ENCODE measurements at regions of chr3 and their contacts with region 1.

Region 1: DNA sequence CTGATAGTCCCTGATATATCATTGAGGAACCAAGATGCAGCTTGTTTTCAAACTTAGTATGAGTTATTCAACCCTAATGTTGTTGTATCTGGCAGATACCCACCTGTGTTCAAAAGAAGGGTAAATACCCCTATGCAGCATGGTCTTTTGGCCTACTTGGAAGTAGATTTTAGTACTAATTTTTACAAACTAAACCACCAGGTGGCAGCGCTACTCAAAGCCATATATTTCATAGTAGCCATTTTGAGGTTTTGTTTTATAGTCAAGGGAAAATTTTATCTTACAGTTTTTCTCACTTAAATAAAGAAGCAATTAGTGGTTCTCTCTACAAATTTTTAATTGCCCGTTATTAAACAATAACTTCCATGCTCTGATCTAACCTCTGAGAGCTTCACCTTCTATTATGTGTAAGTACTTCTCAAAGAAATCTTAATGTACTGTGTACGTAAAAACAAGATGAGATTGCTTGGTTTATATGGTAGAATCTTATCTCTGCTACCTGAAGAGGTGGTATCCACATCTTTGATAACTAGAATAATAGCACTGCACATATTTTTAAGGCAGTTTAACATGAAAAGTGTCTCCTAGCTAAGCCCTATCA is 31.5 kb upstream of the MLF1 start:
- DNase-seq: peak; percentile 70
- H3K4me3 Mint-ChIP-seq: no peak overlapping the region
- H3K27ac Mint-ChIP-seq: no peak overlapping the region
- H3K4me1 Mint-ChIP-seq: no peaks in the 10 kb centered on the region
- H3K27me3 Mint-ChIP-seq: no peaks in the 10 kb centered on the region
- CTCF ChIP-seq: peak; percentile 55

Region 2: GRCh38 chr3:157999246-157999645 is 540.3 kb before region 1 on chr3:
- CTCF ChIA-PET with region 1: no interaction called
- intact Hi-C with region 1: loop called (anchors 10 kb)
- DNase-seq: peak; percentile 15
- H3K4me3 Mint-ChIP-seq: no peak overlapping the region
- H3K27ac Mint-ChIP-seq: no peak overlapping the region
- H3K4me1 Mint-ChIP-seq: no peaks in the 10 kb centered on the region
- H3K27me3 Mint-ChIP-seq: no peaks in the 10 kb centered on the region
- CTCF ChIP-seq: no peak

Region 3: DNA sequence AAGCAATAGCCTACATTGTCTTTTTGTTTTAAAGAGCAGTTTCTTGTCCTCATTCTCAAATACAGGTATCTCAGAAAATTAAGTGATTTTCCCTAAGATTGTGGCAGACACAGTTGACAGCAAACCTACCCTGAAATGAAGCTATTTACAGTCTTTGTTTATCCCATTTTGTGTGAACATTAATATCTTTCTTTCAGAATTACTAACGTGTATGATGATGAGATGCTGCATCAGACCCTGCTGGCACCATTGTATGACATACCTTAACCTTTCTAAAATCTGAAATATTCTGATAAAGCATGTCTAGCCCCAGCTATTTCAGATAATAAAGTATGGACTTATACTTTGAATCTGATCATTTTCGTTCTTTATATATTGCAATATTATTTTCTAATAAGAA is 243.7 kb before region 1 on chr3:
- CTCF ChIA-PET with region 1: no interaction called
- intact Hi-C with region 1: no loop called
- DNase-seq: no peak
- H3K4me3 Mint-ChIP-seq: no peak overlapping the region
- H3K27ac Mint-ChIP-seq: no peak overlapping the region
- H3K4me1 Mint-ChIP-seq: no peaks in the 10 kb centered on the region
- H3K27me3 Mint-ChIP-seq: no peaks in the 10 kb centered on the region
- CTCF ChIP-seq: no peak

Region 4: DNA sequence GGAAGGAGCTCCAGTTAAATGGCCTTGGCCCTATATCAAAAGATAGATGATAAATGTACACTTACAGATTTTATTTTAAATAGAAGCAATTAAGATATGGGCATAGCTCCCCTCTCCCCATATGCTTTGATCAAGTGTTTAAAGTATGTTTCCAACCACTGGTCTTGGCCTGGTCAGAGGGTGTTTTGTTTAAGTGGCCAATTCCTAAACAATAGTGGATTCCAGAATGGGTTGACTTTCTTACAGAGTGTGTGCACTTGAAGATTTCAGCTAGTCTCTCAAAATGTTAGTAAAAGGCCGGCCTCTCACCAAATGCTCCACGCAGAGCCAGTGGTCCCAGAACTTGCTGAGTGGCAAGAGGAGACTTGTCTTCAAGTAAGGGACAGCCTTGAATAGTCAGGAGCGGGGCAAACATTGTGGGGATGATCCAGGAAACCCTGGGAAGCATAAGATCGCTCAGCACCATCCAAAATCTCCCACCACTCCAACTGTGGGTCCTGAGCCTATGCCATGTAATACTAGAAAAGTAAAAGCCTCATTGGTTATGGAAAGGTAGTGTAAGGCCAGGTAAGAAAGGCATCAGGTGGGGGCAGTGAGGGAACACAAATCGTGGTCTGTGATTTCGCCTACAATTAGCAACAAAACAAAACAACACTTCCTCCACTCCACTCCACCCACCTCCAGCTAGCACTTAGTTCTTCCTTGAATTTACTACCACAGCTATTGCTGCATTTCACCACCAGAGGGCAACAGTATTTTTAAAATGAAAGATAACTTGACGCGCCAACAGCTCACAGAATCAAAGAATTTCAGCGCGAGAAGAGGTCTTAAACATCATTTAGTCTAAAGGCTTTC is 187.9 kb after region 1 on chr3:
- CTCF ChIA-PET with region 1: no interaction called
- intact Hi-C with region 1: no loop called
- DNase-seq: peak; percentile 80
- H3K4me3 Mint-ChIP-seq: peak overlapping the region; percentile 93
- H3K27ac Mint-ChIP-seq: peak overlapping the region; percentile 37
- H3K4me1 Mint-ChIP-seq: peaks cover 76% of the 10 kb centered on the region
- H3K27me3 Mint-ChIP-seq: no peaks in the 10 kb centered on the region
- CTCF ChIP-seq: peak; percentile 87

Measured in Calu3 (cell line).